PC-3 (cell line): ENCODE measurements at regions of chr10 and their contacts with region 1.

Region 1: DNA sequence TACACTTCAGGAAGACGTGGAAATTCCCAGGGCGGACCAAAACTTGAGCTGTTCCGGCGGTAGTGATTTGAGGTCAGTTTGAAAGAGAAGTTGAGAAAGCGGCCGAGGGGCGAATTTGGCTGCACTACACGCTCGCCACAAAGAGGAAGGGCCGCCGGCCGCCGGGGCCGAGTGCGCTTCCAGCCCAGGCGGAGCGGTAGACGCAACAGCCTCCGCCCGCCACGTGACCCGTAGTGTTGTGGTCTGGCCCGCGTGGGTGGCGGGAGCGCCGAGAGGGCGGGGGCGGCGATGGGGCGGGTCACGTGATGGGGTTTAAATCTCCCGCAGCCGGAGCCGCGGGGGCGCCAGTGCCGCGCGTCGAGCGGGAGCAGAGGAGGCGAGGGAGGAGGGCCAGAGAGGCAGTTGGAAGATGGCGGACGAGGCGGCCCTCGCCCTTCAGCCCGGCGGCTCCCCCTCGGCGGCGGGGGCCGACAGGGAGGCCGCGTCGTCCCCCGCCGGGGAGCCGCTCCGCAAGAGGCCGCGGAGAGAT is at the start of gene SIRT1:
- DNase-seq: peak; percentile 99
- ATAC-seq: peak; percentile 77
- H3K4me3 ChIP-seq: peak within 1 kb of the TSS; percentile 75
- H3K27ac ChIP-seq: peak within 1 kb of the TSS; percentile 43
- H3K4me1 ChIP-seq: peaks cover 16% of the 10 kb centered on the region
- H3K27me3 ChIP-seq: no peaks in the 10 kb centered on the region
- CTCF ChIP-seq: 0 out of 2 replicates have a peak, but pooled peaks have one; percentile 21
- total RNA-seq, gene SIRT1: 20.4 and 20.8 TPM in 2 replicates

Region 2: GRCh38 chr10:67735430-67735829 is 148.9 kb before region 1 on chr10:
- CTCF ChIA-PET with region 1: no interaction called
- POLR2A ChIA-PET with region 1: no interaction called
- intact Hi-C with region 1: no loop called
- DNase-seq: no peak
- ATAC-seq: no peak
- H3K4me3 ChIP-seq: no peak overlapping the region
- H3K27ac ChIP-seq: no peak overlapping the region
- H3K4me1 ChIP-seq: no peaks in the 10 kb centered on the region
- H3K27me3 ChIP-seq: peaks cover 41% of the 10 kb centered on the region
- CTCF ChIP-seq: no peak

Region 3: GRCh38 chr10:67788025-67788886 is 96.1 kb before region 1 on chr10:
- CTCF ChIA-PET with region 1: interaction called, 7 read pairs
- POLR2A ChIA-PET with region 1: interaction called, 6 read pairs
- intact Hi-C with region 1: loop called (anchors 1 kb)
- DNase-seq: peak; percentile 94
- ATAC-seq: peak; percentile 89
- H3K4me3 ChIP-seq: no peak overlapping the region
- H3K27ac ChIP-seq: no peak overlapping the region
- H3K4me1 ChIP-seq: peaks cover 8% of the 10 kb centered on the region; the same call in 1 of the 2 replicates
- H3K27me3 ChIP-seq: no peaks in the 10 kb centered on the region
- CTCF ChIP-seq: peak; percentile 99

Region 4: GRCh38 chr10:67864607-67865371 is 19.6 kb before region 1 on chr10:
- CTCF ChIA-PET with region 1: no interaction called
- POLR2A ChIA-PET with region 1: interaction called, 19 read pairs
- intact Hi-C with region 1: no loop called
- DNase-seq: no peak
- ATAC-seq: no peak
- H3K4me3 ChIP-seq: no peak overlapping the region
- H3K27ac ChIP-seq: no peak overlapping the region
- H3K4me1 ChIP-seq: no peaks in the 10 kb centered on the region
- H3K27me3 ChIP-seq: no peaks in the 10 kb centered on the region
- CTCF ChIP-seq: no peak

Region 5: GRCh38 chr10:68052463-68052862 is 168.1 kb after region 1 on chr10:
- CTCF ChIA-PET with region 1: no interaction called
- POLR2A ChIA-PET with region 1: interaction called, 31 read pairs
- intact Hi-C with region 1: no loop called
- DNase-seq: peak; percentile 36
- ATAC-seq: no peak
- H3K4me3 ChIP-seq: no peak overlapping the region
- H3K27ac ChIP-seq: no peak overlapping the region
- H3K4me1 ChIP-seq: peaks cover 15% of the 10 kb centered on the region
- H3K27me3 ChIP-seq: no peaks in the 10 kb centered on the region
- CTCF ChIP-seq: no peak

Region 6: GRCh38 chr10:68074775-68075549 is 190.6 kb after region 1 on chr10 and contains the start of gene HERC4:
- CTCF ChIA-PET with region 1: no interaction called
- POLR2A ChIA-PET with region 1: interaction called, 30 read pairs
- intact Hi-C with region 1: loop called (anchors 2 kb)
- DNase-seq: peak; percentile 97
- ATAC-seq: peak; percentile 86
- H3K4me3 ChIP-seq: peak within 1 kb of the TSS; percentile 87
- H3K27ac ChIP-seq: peak within 1 kb of the TSS; percentile 87
- H3K4me1 ChIP-seq: peaks cover 21% of the 10 kb centered on the region
- H3K27me3 ChIP-seq: no peaks in the 10 kb centered on the region
- CTCF ChIP-seq: no peak
- total RNA-seq, gene HERC4: 57.4 and 74.4 TPM in 2 replicates

Region 7: DNA sequence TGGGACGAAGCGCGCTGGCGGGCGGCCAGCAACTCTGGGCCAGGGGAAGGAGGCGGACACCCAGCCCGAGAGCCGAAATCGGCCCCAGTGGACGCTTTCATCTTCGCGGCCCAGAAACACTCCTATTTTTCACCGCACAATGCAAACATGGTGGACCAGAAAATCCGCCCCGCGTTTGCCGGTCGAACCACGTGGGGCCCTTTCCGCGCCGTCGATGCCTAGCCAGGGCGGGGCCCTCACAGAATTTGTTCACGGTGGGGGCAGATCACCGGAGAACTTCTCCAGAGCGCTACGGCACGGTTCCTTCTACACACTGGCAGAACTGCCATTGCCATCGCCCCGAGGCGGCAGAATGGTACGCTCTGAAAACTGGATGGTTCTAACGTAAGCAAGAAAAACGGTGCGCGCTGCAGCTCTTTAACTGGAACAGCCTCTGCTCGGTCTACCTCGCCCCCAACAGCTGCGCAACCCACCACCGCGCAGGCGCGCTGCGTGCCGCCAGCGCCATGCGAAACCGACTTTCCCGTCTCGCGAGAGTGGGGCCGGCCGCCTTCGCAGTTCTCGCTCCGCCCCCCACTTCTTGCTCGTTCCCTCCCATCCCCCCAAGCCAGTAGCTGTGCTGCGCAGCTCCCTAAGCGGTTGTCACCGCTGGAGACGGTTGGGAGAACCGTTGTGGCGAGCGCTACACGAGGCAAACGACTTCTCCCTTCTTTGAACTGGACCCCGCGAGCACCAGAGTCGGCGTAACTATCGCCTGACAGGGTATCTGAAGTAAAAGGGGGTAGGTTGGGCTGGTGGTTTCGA is 447.3 kb after region 1 on chr10 and contains the start of gene HNRNPH3:
- CTCF ChIA-PET with region 1: no interaction called
- POLR2A ChIA-PET with region 1: interaction called, 7 read pairs
- intact Hi-C with region 1: loop called (anchors 10 kb)
- DNase-seq: peak; percentile 100
- ATAC-seq: peak; percentile 74
- H3K4me3 ChIP-seq: peak within 1 kb of the TSS; percentile 87
- H3K27ac ChIP-seq: peak within 1 kb of the TSS; percentile 82
- H3K4me1 ChIP-seq: peaks cover 44% of the 10 kb centered on the region
- H3K27me3 ChIP-seq: no peaks in the 10 kb centered on the region
- CTCF ChIP-seq: no peak
- total RNA-seq, gene HNRNPH3: 40.5 and 77.5 TPM in 2 replicates